SK-N-SH (cell line): ENCODE measurements at regions of chr12 and their contacts with region 1.

Region 1: GRCh38 chr12:5988659-5989116 is 43.6 kb upstream of the ANO2 start:
- DNase-seq: peak; percentile 85
- H3K4me3 ChIP-seq: peak overlapping the region in 1 of 2 experiments; percentile 52; a peak in 1 of 4 replicates
- H3K27ac ChIP-seq: no peak overlapping the region
- H3K4me1 ChIP-seq: peaks cover 0 to 3% of the 10 kb centered on the region in 2 experiments; a peak in 1 of 4 replicates
- H3K27me3 ChIP-seq: no peaks in the 10 kb centered on the region; the same call in 1 of the 2 replicates
- CTCF ChIP-seq: peak; percentile 97
- EP300 ChIP-seq: no peak
- RAD21 ChIP-seq: peak; percentile 94

Region 2: DNA sequence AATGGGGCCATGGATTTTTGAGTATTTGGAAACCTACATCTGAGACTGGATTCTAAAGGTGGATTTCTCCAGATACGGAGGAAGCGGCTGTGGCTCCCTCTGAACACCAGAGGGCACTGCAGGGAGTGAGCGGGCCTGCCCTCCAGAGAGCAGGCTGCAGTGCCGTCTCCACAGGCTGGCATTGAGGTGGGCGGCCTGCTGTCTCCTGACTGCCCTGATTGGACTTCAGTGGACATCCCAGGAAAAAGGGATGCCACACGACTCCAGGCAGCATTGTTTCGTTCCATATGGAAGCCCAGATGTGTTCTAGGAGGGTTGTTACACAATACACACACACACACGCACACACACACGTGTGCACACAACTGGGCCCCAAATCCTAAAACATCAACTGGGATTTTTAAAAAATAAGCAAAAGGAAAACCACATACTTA is 22.7 kb before region 1 on chr12:
- CTCF ChIA-PET with region 1: interaction called, 52 read pairs
- POLR2A ChIA-PET with region 1: no interaction called
- DNase-seq: peak; percentile 80
- H3K4me3 ChIP-seq: no peak overlapping the region
- H3K27ac ChIP-seq: no peak overlapping the region
- H3K4me1 ChIP-seq: no peaks in the 10 kb centered on the region; a peak in 1 of 4 replicates
- H3K27me3 ChIP-seq: peaks cover 7% of the 10 kb centered on the region; the same call in 1 of the 2 replicates
- CTCF ChIP-seq: peak; percentile 88
- EP300 ChIP-seq: no peak
- RAD21 ChIP-seq: peak; percentile 57

Region 3: GRCh38 chr12:5973461-5974130 is 15.1 kb before region 1 on chr12:
- CTCF ChIA-PET with region 1: interaction called, 38 read pairs
- POLR2A ChIA-PET with region 1: no interaction called
- DNase-seq: no peak
- H3K4me3 ChIP-seq: no peak overlapping the region
- H3K27ac ChIP-seq: no peak overlapping the region
- H3K4me1 ChIP-seq: no peaks in the 10 kb centered on the region
- H3K27me3 ChIP-seq: peaks cover 57% of the 10 kb centered on the region; the same call in 1 of the 2 replicates
- CTCF ChIP-seq: no peak
- EP300 ChIP-seq: no peak
- RAD21 ChIP-seq: no peak

Region 4: DNA sequence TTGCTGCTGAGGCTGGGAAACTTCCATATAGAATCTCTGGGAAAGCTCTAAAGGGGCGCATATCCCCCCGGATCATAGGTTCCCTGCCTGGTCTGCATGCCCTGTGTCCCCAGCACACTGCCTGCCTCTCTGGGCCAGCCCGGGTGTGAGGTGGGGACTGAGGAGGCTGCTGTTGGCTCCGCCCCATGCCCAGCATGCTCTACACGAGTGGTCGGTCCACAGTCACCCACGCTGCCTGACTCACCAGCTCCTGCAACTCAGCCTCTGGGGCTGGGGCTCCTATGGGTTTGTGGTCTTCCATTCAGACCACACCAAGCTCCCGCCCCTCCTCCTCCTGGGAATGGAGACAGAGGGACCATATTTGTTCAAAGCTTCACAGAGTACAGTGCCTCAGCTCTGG is 44.9 kb after region 1 on chr12:
- CTCF ChIA-PET with region 1: interaction called, 334 read pairs
- POLR2A ChIA-PET with region 1: no interaction called
- DNase-seq: no peak
- H3K4me3 ChIP-seq: no peak overlapping the region
- H3K27ac ChIP-seq: no peak overlapping the region
- H3K4me1 ChIP-seq: no peaks in the 10 kb centered on the region; a peak in 1 of 4 replicates
- H3K27me3 ChIP-seq: no peaks in the 10 kb centered on the region
- CTCF ChIP-seq: no peak
- EP300 ChIP-seq: no peak
- RAD21 ChIP-seq: no peak

Region 5: GRCh38 chr12:6039894-6040568 is 51.3 kb after region 1 on chr12:
- CTCF ChIA-PET with region 1: interaction called, 334 read pairs
- POLR2A ChIA-PET with region 1: no interaction called
- DNase-seq: peak; percentile 83
- H3K4me3 ChIP-seq: no peak overlapping the region; a peak in 1 of 4 replicates
- H3K27ac ChIP-seq: no peak overlapping the region; a peak in 1 of 4 replicates
- H3K4me1 ChIP-seq: peaks cover 0 to 12% of the 10 kb centered on the region in 2 experiments; a peak in 1 of 4 replicates
- H3K27me3 ChIP-seq: no peaks in the 10 kb centered on the region
- CTCF ChIP-seq: peak; percentile 90
- EP300 ChIP-seq: no peak
- RAD21 ChIP-seq: peak; percentile 98

Region 6: GRCh38 chr12:6056406-6057240 is 67.9 kb after region 1 on chr12:
- CTCF ChIA-PET with region 1: interaction called, 34 read pairs
- POLR2A ChIA-PET with region 1: no interaction called
- DNase-seq: peak; percentile 74
- H3K4me3 ChIP-seq: no peak overlapping the region
- H3K27ac ChIP-seq: no peak overlapping the region; a peak in 1 of 4 replicates
- H3K4me1 ChIP-seq: peaks cover 4 to 25% of the 10 kb centered on the region in 2 experiments; a peak in 2 of 4 replicates
- H3K27me3 ChIP-seq: no peaks in the 10 kb centered on the region
- CTCF ChIP-seq: peak; percentile 49
- EP300 ChIP-seq: no peak
- RAD21 ChIP-seq: peak; percentile 42; the same call in 1 of the 2 replicates